Esophagus muscularis mucosa (tissue), 4 donors: ENCODE measurements at regions of chr13 and their contacts with region 1.

Region 1: DNA sequence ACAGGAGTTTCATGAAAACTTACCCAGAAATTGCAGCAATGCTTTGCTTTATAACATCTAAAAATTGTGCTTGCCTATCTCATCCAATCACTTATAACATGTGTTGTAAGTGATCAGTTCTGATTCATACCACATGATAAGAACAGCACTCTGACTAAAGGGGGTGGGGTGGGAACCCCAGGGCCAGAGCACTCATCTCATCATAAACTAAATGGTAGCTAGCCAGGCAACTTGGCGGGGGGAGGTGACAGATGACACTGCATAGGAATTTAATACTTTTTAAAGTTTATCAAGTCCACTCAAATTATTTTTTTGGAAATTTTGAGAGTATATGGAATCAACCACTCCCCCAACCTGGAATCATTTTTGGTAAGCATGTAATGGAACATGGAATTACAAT is 42.1 kb downstream of the FOXO1 start:
- DNase-seq: peak; percentile 66
- H3K4me3 ChIP-seq: no peak overlapping the region
- H3K27ac ChIP-seq: no peak overlapping the region
- H3K4me1 ChIP-seq: peaks cover 43 to 88% (median 68%) of the 10 kb centered on the region in 4 donors
- H3K27me3 ChIP-seq: no peaks in the 10 kb centered on the region
- CTCF ChIP-seq: no peak
- EP300 ChIP-seq: no peak
- POLR2A ChIP-seq: no peak

Region 2: GRCh38 chr13:40570930-40571329 is 53.5 kb before region 1 on chr13:
- intact Hi-C with region 1: loop called (anchors 5 kb)
- DNase-seq: no peak
- H3K4me3 ChIP-seq: no peak overlapping the region
- H3K27ac ChIP-seq: no peak overlapping the region
- H3K4me1 ChIP-seq: peaks cover 35 to 78% (median 74%) of the 10 kb centered on the region in 4 donors
- H3K27me3 ChIP-seq: no peaks in the 10 kb centered on the region
- CTCF ChIP-seq: no peak
- EP300 ChIP-seq: no peak
- POLR2A ChIP-seq: no peak